Activated CD4-positive, alpha-beta memory T cell treated with anti-CD3 and anti-CD28 coated beads for 36 hours (primary cell): ENCODE measurements at regions of chr19 and their contacts with region 1.

Region 1: DNA sequence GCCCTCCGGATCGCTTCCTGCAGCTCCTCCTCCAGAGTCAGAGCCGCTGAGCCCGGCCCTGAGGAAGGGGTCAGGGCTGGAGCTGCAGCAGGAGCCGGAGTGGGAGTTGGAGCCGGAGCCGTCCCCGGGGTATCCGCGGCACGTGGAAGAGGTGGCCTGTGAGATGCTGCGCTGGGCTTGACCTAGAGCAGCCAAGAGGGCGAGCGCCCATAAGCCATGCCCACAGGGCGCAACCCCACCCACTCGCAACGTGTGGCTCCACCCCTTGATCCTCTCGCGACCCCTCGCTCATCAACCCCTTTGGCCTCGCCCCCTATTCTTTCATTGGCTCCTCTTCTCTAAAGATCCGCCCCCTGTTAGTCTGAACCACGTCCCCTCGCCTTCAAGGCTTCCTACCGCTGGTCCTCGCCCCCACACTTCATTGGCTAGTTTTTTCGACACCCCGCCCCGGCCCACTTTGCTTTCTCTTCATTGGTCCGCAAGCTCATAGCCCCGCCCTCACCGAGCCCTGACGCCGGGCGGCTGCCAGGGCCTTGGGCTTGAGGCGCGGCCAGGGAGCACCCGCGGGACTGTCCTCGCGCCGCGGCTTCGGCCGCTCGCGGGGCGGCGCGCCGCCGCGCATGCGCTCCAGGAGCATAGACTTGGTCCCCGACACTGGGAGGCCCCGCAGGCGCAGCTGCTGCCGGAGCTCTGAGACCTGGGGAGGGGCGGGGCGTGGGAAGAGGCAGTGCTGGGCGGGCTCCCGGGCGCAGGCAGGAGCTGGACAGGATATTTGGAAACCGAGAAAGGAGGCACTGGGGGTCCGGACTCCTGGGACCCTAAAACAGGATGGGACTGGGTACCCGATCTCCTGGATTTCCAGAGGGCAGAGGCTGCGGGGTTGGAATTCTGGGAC is 5.4 kb downstream of the MAMSTR start:
- DNase-seq: peak; percentile 99
- H3K4me3 Mint-ChIP-seq: peak overlapping the region; percentile 83
- H3K27ac Mint-ChIP-seq: peak overlapping the region; percentile 74
- H3K4me1 Mint-ChIP-seq: peaks cover 11% of the 10 kb centered on the region
- H3K27me3 Mint-ChIP-seq: no peaks in the 10 kb centered on the region

Region 2: DNA sequence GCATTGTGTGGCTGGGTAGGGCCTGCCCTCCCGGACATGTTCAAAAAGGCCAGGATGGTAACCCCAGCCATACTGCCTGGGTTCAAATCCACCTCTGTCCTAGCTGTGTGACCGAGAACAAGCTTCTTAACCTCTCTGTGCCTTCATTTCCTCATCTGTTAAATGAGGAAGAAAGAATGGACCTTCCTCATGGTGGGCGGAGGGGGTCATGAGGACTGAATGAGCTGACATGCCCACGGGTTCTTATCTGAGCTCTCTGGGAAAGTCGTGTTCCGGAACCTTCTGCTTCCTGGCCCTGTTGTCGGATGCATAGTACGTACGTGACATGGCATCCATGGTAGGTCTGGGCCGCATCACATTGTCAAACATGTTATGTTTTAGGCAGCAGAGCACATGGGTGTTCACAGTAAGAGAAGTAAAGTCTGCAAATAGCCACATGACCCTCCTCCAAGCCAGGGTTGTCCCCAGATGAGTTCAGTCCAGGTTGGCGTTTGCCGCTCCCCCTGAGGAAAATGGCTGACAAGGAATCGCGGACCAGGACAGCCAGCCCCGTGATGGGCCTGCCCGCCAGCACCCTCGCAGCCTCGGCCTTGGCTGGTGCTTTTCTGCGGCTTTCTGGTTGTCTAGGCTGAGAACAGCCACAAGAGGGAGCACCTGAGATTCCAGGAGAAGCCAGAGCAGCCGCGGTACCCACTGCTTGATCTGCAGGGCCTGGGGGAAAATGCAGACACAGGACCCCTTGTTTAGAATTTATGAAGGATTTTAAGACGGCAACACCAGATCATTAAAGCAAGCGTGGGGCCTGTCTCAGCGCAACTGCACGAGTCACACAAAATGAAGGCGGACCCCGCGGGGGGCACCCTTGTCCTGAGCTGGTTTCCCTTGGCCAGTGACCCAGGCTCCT is 38.9 kb before region 1 on chr19:
- CTCF ChIA-PET with region 1: interaction called, 14 read pairs
- POLR2A ChIA-PET with region 1: interaction called, 3 read pairs
- intact Hi-C with region 1: no loop called
- DNase-seq: peak; percentile 82
- H3K4me3 Mint-ChIP-seq: no peak overlapping the region
- H3K27ac Mint-ChIP-seq: no peak overlapping the region
- H3K4me1 Mint-ChIP-seq: peaks cover 6% of the 10 kb centered on the region
- H3K27me3 Mint-ChIP-seq: no peaks in the 10 kb centered on the region